ENCODE measurements at regions of chrX and their contacts with region 1.

Region 1: DNA sequence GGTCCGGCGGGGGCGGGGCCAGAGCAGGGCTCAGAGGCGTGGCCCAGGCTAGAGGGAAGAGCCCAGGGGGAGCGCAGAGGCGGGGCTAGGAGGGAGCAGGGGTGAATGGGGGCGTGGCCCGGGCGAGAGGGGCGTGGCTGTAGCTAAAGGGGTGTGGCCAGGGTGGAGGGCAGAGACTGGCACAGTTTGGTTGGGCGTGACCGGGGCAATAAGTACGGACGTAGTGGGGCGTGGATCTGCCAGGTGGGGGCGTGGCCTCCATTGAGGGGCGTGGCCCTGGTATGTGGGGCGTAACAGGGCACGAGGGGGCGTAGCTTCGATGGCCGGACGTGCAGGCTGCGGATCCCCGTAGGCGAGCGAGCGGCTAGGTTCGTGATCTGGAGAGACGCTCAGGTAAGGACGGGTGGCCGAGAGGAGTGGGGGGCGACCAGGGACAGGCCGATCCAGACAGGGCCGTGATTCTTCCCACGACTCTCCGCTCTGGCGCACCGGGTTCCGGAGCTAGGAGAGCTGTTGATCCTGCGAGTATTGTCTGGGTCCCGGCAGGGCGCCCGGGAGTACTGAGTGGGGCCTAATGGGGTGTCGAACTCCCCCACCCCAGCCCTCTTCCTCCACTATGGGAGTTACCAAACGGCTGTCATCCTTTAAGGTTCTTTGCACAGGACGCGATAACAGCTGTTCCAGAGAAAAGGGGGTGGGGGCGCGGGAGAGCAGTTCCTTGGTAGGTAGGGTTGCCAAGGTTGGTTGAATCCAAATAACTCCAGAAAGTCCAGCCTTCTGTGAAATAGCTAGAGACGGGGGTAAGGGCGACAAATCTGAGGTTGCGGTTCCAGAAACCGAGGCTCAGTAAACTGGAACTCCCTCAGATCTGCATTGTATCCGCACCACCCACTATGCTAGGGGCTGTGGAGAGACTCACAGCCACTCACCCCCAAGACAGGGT is at the start of gene CA5B:
- DNase-seq: peak; percentile 94
- ATAC-seq: peak; percentile 89
- H3K4me3 ChIP-seq: peak within 1 kb of the TSS; percentile 88
- H3K27ac ChIP-seq: peak within 1 kb of the TSS; percentile 88
- H3K4me1 ChIP-seq: peaks cover 27% of the 10 kb centered on the region
- H3K27me3 ChIP-seq: no peaks in the 10 kb centered on the region
- CTCF ChIP-seq: peak; percentile 17; the same call in 1 of the 2 replicates
- total RNA-seq, gene CA5B: 8.5 and 12.3 TPM in 2 replicates

Region 2: DNA sequence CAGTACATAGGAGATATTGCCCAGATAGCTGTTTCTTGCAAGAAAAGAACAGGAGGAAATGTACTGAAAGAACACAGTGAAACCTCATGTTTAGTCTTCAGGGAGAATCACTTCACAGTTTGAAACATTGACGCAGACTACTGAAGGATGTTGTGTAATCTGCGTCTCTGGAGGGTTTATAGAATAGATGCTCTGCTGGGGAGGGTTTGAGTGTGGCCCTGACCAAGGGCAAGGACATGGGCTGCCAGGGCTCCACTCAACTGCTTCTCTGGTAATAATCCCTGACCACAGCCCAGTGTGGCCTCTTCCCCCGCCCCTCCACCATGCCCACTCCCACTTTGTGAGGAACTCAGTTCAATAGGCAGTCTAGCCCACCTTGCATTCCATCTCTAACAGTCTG is 121.7 kb before region 1 on chrX:
- CTCF ChIA-PET with region 1: no interaction called
- POLR2A ChIA-PET with region 1: no interaction called
- intact Hi-C with region 1: no loop called
- DNase-seq: no peak
- ATAC-seq: no peak
- H3K4me3 ChIP-seq: no peak overlapping the region
- H3K27ac ChIP-seq: no peak overlapping the region
- H3K4me1 ChIP-seq: peaks cover 30% of the 10 kb centered on the region
- H3K27me3 ChIP-seq: no peaks in the 10 kb centered on the region
- CTCF ChIP-seq: no peak

Region 3: DNA sequence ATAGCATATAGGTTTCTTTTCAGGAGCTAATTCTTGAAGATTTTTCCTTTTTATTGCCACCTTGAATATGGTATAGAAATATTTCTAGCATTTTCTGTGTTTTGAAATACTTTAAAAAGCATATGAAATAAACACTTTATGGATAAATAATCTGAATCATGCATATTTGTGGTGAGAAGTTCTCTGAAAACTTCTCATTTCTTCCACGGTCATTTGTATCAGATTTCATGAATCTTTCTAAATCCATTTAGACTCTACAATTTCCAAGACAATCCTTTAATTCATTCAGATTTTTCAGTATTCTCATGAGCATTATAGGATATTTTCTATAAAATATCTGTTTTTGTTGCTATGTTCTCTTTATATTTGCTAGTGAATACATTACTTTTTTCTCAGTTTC is 16.3 kb before region 1 on chrX:
- CTCF ChIA-PET with region 1: no interaction called
- POLR2A ChIA-PET with region 1: interaction called, 12 read pairs
- intact Hi-C with region 1: no loop called
- DNase-seq: no peak
- ATAC-seq: no peak
- H3K4me3 ChIP-seq: no peak overlapping the region
- H3K27ac ChIP-seq: no peak overlapping the region
- H3K4me1 ChIP-seq: peaks cover 6% of the 10 kb centered on the region; the same call in 1 of the 2 replicates
- H3K27me3 ChIP-seq: no peaks in the 10 kb centered on the region
- CTCF ChIP-seq: no peak

Region 4: DNA sequence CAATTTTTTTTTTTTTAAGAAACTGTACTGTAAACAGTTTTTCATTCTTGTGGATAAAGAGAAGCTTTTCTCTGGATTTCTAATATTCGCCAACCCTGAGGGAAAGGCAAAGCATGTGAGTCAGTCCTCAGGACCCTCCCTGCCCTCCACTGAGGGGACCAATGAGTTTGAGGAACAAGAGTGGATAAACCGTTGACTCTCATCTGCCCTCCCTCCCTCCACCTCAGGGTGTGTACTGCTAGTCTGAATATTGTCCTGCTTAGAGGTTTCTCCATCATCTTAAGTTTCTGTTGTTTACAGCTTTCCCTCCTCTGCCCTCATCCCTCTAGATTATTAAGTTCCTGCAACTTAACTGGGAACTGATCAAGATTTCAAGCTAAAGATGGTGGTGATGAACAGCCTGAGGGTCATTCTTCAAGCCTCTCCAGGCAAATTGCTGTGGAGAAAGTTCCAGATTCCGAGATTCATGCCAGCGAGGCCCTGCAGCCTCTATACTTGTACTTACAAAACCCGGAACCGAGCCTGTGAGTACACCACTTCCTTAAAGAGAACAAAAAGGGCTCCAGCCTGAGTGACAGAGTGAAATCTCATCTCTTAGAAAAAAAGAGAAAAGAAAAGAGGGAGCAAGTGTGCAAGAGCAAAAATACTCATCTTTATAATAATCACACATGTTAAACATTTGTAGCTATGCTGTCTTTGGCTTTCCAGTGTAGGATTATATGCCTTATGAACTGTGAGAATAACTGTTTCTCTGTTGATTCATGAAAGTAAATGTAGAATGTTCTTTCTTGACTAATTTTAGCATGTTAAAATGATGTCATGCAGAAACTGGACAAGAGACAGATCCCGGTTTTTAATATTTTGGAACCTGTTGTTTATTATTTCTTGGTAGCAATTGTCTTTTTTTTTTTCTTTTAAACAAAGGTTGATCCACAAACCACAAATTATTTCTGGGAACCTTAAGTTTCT is 11.7 kb after region 1 on chrX:
- CTCF ChIA-PET with region 1: interaction called, 4 read pairs
- POLR2A ChIA-PET with region 1: interaction called, 4 read pairs
- intact Hi-C with region 1: loop called (anchors 1 kb)
- DNase-seq: no peak
- ATAC-seq: no peak
- H3K4me3 ChIP-seq: no peak overlapping the region
- H3K27ac ChIP-seq: peak overlapping the region; percentile 100
- H3K4me1 ChIP-seq: peaks cover 35% of the 10 kb centered on the region
- H3K27me3 ChIP-seq: no peaks in the 10 kb centered on the region
- CTCF ChIP-seq: no peak

Measured in PC-3 (cell line).